CD8-positive, alpha-beta T cell (primary cell): ENCODE measurements at regions of chr19 and their contacts with region 1.

Region 1: DNA sequence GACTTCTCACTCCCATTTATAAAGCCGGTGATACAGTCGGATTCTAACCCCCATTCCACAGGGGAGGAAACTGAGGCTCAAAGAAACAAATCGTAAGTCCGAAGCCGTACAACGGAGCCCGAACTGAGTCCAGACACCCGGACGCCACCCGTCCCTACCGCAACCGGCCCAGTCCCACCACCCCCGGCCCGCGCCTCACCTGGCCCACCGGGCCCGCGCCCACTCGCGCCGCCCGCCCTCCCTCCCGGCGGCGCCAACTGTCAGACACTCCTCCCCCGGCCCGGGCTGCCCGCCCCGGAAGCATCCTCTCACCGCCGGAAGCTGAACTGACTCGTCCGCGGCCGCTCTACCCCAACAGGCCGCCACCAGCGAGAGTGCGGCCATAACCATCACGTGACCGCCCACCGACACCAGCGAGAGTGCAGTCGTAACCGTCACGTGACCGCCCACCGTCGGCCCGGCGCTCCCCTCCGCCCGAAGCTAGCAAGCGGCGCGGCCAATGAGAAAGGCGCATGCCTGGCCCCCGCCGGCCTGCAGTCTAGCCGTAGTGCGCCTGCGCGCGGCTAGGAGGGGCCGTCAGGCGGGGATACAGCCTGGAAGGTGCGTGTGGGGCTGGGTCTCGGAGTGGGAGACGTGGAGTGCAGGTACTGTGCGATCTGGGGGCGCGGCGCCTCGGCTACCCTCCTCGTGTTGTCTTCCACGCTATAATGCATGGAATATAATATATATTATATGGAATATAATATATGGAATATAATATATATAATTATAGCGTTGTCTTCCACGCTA is at the starts of genes C19orf47 and PLD3:
- DNase-seq: peak; percentile 96 to 100 (median 98)
- ATAC-seq: peak; percentile 89
- H3K4me3 ChIP-seq: peak within 1 kb of the TSS; percentile 61 to 89
- H3K4me3 Mint-ChIP-seq: peak within 1 kb of the TSS; percentile 88
- H3K27ac ChIP-seq: peak within 1 kb of the TSS; percentile 73
- H3K27ac Mint-ChIP-seq: peak within 1 kb of the TSS; percentile 90
- H3K4me1 ChIP-seq: peaks cover 13% of the 10 kb centered on the region
- H3K4me1 Mint-ChIP-seq: peaks cover 37% of the 10 kb centered on the region
- H3K27me3 ChIP-seq: no peaks in the 10 kb centered on the region
- H3K27me3 Mint-ChIP-seq: no peaks in the 10 kb centered on the region
- CTCF ChIP-seq: no peak
- total RNA-seq, gene C19orf47: 10.2 to 11.2 TPM
- total RNA-seq, gene PLD3: 48.9 to 56.1 TPM

Region 2: DNA sequence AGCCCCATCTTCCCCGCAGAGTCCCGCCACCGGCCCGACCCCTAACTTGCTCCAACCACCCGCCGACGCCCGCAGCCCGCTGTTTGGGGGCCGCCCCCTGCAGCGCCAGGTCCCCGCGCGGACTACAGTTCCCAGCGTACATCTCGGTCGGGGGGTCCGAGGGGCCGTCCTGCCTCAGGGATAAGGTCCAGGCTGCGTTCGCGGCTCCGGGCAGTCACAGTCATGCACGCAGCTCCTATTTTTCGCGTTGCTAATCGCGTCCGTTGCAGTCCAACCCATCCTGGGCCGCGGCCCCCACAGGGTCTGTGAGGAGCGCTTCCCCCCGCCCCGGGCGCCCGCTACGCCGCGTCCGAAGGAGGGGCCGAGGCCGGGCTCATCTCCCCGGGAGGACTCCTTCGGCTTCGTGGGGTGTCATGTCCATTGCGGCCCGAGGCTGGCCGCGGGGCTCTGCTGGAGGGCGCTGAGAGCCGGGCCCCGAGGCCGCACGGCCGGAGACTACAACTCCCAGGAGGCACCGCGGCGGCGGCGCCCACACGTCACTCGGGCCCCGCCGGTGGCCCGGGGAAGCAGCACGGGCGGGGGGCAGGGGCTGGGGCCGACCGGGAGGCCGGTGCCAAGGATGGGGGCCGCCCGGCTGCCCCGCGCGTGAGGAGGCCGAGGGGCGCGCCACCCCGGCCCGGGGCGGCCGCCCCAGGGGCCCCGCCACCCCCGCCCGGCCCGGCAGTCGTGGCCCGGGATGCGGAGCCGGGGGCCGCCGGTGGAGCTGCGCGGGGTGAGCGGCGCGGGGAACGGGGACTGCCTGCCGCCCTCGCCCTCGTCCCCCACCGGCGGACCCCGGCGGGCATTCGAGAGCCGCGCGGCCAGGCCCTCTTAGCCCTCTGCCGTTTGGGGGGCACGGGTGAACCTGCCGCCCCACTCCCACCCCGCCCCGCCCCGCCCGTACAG is 157.2 kb before region 1 on chr19 and contains the start of gene MAP3K10:
- CTCF ChIA-PET with region 1: no interaction called
- POLR2A ChIA-PET with region 1: no interaction called
- intact Hi-C with region 1: loop called in 1 of 2 experiments (anchors 2 kb)
- DNase-seq: peak; percentile 41 to 86 (median 70)
- ATAC-seq: peak; percentile 79
- H3K4me3 ChIP-seq: peak within 1 kb of the TSS; percentile 82 to 100
- H3K4me3 Mint-ChIP-seq: peak within 1 kb of the TSS; percentile 91
- H3K27ac ChIP-seq: peak within 1 kb of the TSS; percentile 81 to 90
- H3K27ac Mint-ChIP-seq: peak within 1 kb of the TSS; percentile 91
- H3K4me1 ChIP-seq: peaks cover 16% of the 10 kb centered on the region
- H3K4me1 Mint-ChIP-seq: peaks cover 34% of the 10 kb centered on the region
- H3K27me3 ChIP-seq: no peaks in the 10 kb centered on the region
- H3K27me3 Mint-ChIP-seq: no peaks in the 10 kb centered on the region
- CTCF ChIP-seq: no peak
- total RNA-seq, gene MAP3K10: 26.4 to 27.7 TPM

Region 3: GRCh38 chr19:40425450-40426287 is 77.3 kb after region 1 on chr19 and contains the start of gene SERTAD1:
- CTCF ChIA-PET with region 1: no interaction called
- POLR2A ChIA-PET with region 1: interaction called, 3 read pairs
- intact Hi-C with region 1: loop called (anchors 1 kb)
- DNase-seq: peak; percentile 100
- ATAC-seq: peak; percentile 93
- H3K4me3 ChIP-seq: peak within 1 kb of the TSS; percentile 72 to 92
- H3K4me3 Mint-ChIP-seq: peak within 1 kb of the TSS; percentile 92
- H3K27ac ChIP-seq: peak within 1 kb of the TSS; percentile 91 to 92
- H3K27ac Mint-ChIP-seq: peak within 1 kb of the TSS; percentile 98
- H3K4me1 ChIP-seq: peaks cover 17% of the 10 kb centered on the region
- H3K4me1 Mint-ChIP-seq: peaks cover 28% of the 10 kb centered on the region
- H3K27me3 ChIP-seq: no peaks in the 10 kb centered on the region
- H3K27me3 Mint-ChIP-seq: no peaks in the 10 kb centered on the region
- CTCF ChIP-seq: peak; percentile 55
- total RNA-seq, gene SERTAD1: 36.7 to 38.7 TPM

Region 4: GRCh38 chr19:40570313-40571004 is 222.1 kb after region 1 on chr19:
- CTCF ChIA-PET with region 1: no interaction called
- POLR2A ChIA-PET with region 1: no interaction called
- intact Hi-C with region 1: no loop called
- DNase-seq: peak; percentile 86 to 100 (median 94)
- ATAC-seq: peak; percentile 93
- H3K4me3 ChIP-seq: peak overlapping the region; percentile 34 to 51
- H3K4me3 Mint-ChIP-seq: peak overlapping the region; percentile 72
- H3K27ac ChIP-seq: peak overlapping the region in 1 of 2 experiments; percentile 56
- H3K27ac Mint-ChIP-seq: peak overlapping the region; percentile 67
- H3K4me1 ChIP-seq: peaks cover 18% of the 10 kb centered on the region
- H3K4me1 Mint-ChIP-seq: peaks cover 13% of the 10 kb centered on the region
- H3K27me3 ChIP-seq: peaks cover 6 to 9% of the 10 kb centered on the region in 2 experiments
- H3K27me3 Mint-ChIP-seq: peaks cover 11% of the 10 kb centered on the region
- CTCF ChIP-seq: no peak

Region 5: DNA sequence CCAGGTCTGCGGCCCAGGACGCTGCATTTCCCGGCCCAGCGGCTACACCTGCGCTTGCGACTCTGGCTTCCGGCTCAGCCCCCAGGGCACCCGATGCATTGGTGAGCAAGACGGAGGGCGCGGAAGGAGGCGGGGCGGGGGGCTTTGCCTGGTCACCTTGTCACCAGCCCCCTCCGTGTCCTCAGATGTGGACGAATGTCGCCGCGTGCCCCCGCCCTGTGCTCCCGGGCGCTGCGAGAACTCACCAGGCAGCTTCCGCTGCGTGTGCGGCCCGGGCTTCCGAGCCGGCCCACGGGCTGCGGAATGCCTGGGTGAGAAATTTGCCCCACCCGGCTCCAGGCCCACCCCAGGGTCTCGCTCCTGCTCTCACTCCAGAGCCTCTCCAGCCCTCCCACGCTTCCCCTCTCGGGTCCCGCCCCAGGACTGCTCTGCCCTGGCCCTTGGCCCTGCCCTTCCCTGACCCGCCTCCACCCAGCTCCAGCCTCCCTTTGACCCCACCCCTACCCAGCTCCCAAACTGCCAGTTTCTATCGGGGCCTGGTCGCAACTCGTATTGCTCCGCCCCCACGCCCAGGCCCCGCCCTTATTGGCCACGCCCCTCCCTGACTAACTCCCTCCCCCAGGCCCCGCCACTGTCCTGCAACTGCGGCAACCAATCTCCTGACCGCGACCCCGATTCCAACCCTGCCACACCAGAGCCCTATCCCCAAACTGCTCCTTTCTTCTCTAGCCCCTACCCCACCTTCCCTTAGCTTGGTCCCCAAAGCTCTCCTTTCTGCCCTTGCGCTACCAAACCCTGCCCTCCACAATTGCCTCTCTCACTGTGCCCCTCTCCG is 261.5 kb after region 1 on chr19:
- CTCF ChIA-PET with region 1: no interaction called
- POLR2A ChIA-PET with region 1: no interaction called
- intact Hi-C with region 1: loop called in 1 of 2 experiments (anchors 5 kb)
- DNase-seq: peak; percentile 71 to 90 (median 84)
- ATAC-seq: peak; percentile 35
- H3K4me3 ChIP-seq: peak overlapping the region; percentile 50 to 56
- H3K4me3 Mint-ChIP-seq: peak overlapping the region; percentile 78
- H3K27ac ChIP-seq: peak overlapping the region; percentile 72 to 89
- H3K27ac Mint-ChIP-seq: peak overlapping the region; percentile 94
- H3K4me1 ChIP-seq: peaks cover 44% of the 10 kb centered on the region
- H3K4me1 Mint-ChIP-seq: peaks cover 68% of the 10 kb centered on the region
- H3K27me3 ChIP-seq: no peaks in the 10 kb centered on the region
- H3K27me3 Mint-ChIP-seq: no peaks in the 10 kb centered on the region
- CTCF ChIP-seq: no peak

Region 6: GRCh38 chr19:42325273-42325895 is 1977.1 kb after region 1 on chr19 and contains the start of gene MEGF8:
- CTCF ChIA-PET with region 1: no interaction called
- POLR2A ChIA-PET with region 1: no interaction called
- intact Hi-C with region 1: loop called in 1 of 2 experiments (anchors 5 kb)
- DNase-seq: peak; percentile 96 to 99 (median 98)
- ATAC-seq: peak; percentile 93
- H3K4me3 ChIP-seq: peak within 1 kb of the TSS; percentile 85 to 98
- H3K4me3 Mint-ChIP-seq: peak within 1 kb of the TSS; percentile 97
- H3K27ac ChIP-seq: peak within 1 kb of the TSS; percentile 36 to 56
- H3K27ac Mint-ChIP-seq: peak within 1 kb of the TSS; percentile 88
- H3K4me1 ChIP-seq: peaks cover 12% of the 10 kb centered on the region
- H3K4me1 Mint-ChIP-seq: peaks cover 24% of the 10 kb centered on the region
- H3K27me3 ChIP-seq: peaks cover 4 to 7% of the 10 kb centered on the region in 2 experiments
- H3K27me3 Mint-ChIP-seq: peaks cover 12% of the 10 kb centered on the region
- CTCF ChIP-seq: peak; percentile 66
- total RNA-seq, gene MEGF8: 5.2 to 5.9 TPM